Esophagus squamous epithelium (tissue), 5 donors: ENCODE measurements at regions of chr22 and their contacts with region 1.

Region 1: GRCh38 chr22:22848364-22848866 is 39.2 kb upstream of the IGLL5 start:
- DNase-seq: no peak
- H3K4me3 ChIP-seq: no peak overlapping the region
- H3K27ac ChIP-seq: no peak overlapping the region
- H3K4me1 ChIP-seq: no peaks in the 10 kb centered on the region
- H3K27me3 ChIP-seq: peaks cover 0 to 39% (median 0%) of the 10 kb centered on the region in 4 donors
- CTCF ChIP-seq: peak; percentile 68 to 89 (median 79)
- POLR2A ChIP-seq: no peak

Region 2: GRCh38 chr22:22728382-22728781 is 120.0 kb before region 1 on chr22:
- intact Hi-C with region 1: no loop called
- DNase-seq: no peak
- H3K4me3 ChIP-seq: no peak overlapping the region
- H3K27ac ChIP-seq: no peak overlapping the region
- H3K4me1 ChIP-seq: no peaks in the 10 kb centered on the region
- H3K27me3 ChIP-seq: peaks cover 0 to 36% (median 2%) of the 10 kb centered on the region in 4 donors
- CTCF ChIP-seq: no peak
- POLR2A ChIP-seq: no peak

Region 3: DNA sequence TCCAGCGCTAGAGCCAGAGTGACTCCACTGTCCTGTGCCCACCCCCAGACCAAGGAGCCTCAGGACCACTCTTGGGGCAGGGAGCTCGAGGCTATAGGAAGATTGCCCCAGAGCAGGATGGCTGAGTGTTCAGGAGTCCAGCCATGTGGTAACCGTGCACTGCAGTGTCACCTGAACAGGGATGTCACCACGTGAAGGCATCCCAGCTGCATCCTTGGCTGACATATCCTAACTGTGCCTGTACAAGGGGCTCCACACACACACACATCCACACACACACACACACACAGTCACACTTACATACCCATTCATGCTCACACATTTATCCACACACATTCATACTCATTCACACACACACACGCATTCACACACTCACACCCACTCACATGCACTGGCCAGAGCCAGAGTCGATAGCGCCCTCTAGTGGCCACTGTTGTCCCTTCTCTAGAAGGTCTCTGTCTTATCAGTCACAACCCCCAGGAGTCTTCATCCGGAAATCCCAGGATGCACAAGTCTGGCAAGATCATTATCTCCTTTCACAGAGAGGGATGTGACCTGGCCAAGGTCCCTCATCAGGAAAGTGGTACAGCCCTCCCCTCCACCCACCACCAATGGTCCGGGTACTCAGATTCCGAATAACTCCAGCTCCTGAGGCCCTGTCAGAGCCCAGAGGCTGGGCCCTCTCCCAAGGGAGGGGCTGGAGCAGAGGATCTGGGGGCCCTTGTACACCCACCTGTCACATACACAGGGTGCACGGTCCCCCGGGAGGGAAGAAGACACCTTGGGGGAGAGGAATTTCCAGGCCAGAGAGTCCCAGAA is 94.3 kb after region 1 on chr22:
- intact Hi-C with region 1: loop called (anchors 5 kb)
- DNase-seq: no peak
- H3K4me3 ChIP-seq: no peak overlapping the region
- H3K27ac ChIP-seq: no peak overlapping the region
- H3K4me1 ChIP-seq: no peaks in the 10 kb centered on the region
- H3K27me3 ChIP-seq: peaks cover 0 to 47% (median 0%) of the 10 kb centered on the region in 4 donors
- CTCF ChIP-seq: peak; percentile 49 to 67 (median 59)
- POLR2A ChIP-seq: no peak